ENCODE measurements at regions of chr18 and their contacts with region 1.

Region 1: GRCh38 chr18:50240083-50240563 is 26.2 kb downstream of the CFAP53 start:
- DNase-seq: peak; percentile 96
- H3K4me3 ChIP-seq: no peak overlapping the region
- H3K27ac ChIP-seq: peak overlapping the region; percentile 88
- H3K4me1 ChIP-seq: peaks cover 3% of the 10 kb centered on the region
- H3K27me3 ChIP-seq: no peaks in the 10 kb centered on the region
- CTCF ChIP-seq: no peak

Region 2: DNA sequence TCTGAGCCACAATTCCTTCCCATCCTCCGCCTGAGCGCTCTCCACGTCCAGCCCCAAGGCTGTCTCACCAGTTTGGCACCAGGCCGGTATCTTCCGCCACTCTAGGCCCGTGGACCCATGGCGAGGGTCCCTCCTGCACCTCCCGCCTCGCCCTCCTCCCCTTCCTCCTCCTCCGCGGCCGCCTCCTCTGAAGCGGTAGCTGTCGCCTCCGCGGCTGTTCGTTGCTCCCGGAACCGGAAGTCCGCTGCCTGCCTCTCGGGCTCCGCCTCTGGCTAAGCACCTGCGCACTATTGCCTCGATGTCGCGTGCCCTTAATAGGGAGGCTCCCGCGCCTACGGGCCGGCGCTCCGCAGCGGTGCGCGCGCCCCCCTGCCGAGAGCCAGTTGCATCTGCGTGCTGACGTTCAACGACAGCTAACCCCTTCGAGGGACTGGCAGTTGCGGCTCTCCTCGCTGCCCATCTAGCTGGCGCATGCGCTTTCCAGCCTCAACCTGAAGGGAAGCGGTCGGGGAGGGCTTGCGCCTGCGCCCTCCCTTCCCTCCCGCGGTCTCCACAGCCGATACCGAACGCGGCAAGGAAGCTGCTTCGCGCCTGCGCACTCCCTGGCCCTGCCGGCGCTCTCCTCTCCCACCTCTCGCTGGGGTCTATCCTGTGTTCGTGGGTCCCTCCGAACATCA is 41.3 kb after region 1 on chr18 and contains the start of gene MBD1:
- CTCF ChIA-PET with region 1: no interaction called
- dilution Hi-C with region 1: no loop called
- in situ Hi-C with region 1: no loop called
- intact Hi-C with region 1: loop called (anchors 1 kb)
- DNase-seq: peak; percentile 98
- H3K4me3 ChIP-seq: peak within 1 kb of the TSS; percentile 81 to 100 (median 98)
- H3K27ac ChIP-seq: peak within 1 kb of the TSS; percentile 86
- H3K4me1 ChIP-seq: peaks cover 57% of the 10 kb centered on the region
- H3K27me3 ChIP-seq: no peaks in the 10 kb centered on the region
- CTCF ChIP-seq: peak in 1 of 2 donors; percentile 26
- total RNA-seq, gene MBD1: 102 to 196 TPM

Measured in mammary epithelial cell (primary cell).